PC-9 (cell line): ENCODE measurements at regions of chr17 and their contacts with region 1.

Region 1: DNA sequence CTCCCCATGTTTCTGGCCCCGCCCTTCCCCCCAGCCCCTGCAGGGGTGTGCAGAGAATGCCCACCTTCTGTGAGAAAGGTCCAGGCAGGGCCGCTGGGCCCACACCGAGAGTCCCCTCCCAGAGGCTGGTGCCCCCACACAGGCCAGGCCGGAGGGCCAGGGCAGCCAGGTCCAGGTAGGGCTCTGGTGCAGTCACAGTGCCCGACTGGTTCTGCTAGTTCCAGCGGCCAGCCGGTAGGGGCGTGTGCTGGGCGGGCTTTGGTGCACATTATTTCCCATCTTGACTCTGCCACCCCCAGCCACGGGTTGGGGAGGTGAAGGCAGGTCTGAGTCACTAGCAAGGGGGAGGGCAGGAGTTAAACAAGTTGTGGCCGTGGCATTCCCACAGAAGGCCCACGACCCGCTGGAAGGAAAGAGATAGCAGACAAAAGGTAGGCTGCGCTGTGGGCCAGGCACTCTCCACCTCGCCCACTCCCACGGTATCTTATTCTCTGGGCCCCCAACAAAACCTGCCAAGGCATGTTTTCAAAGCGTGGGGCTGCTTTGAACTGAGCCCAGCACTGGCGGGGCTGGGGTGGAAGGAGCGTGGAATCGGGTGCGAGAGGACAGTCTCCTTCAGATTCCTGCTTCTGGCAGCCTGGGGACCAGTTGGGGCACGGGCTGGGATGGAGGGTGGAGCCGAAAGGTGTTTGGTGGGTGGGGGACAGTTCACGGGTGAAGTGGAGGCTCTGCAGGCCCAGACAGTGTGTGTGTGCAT is 1.9 kb downstream of the EPN3 start:
- DNase-seq: peak; percentile 79 to 82
- H3K4me3 ChIP-seq: peak overlapping the region; percentile 89
- H3K27ac ChIP-seq: peak overlapping the region; percentile 51
- H3K4me1 ChIP-seq: peaks cover 42% of the 10 kb centered on the region
- H3K27me3 ChIP-seq: no peaks in the 10 kb centered on the region
- CTCF ChIP-seq: peak; percentile 72; the same call in 1 of the 2 replicates

Region 2: GRCh38 chr17:50304781-50305404 is 229.5 kb before region 1 on chr17:
- CTCF ChIA-PET with region 1: interaction called, 11 read pairs
- POLR2A ChIA-PET with region 1: no interaction called
- intact Hi-C with region 1: no loop called
- DNase-seq: no peak
- H3K4me3 ChIP-seq: no peak overlapping the region
- H3K27ac ChIP-seq: no peak overlapping the region
- H3K4me1 ChIP-seq: no peaks in the 10 kb centered on the region
- H3K27me3 ChIP-seq: no peaks in the 10 kb centered on the region
- CTCF ChIP-seq: no peak

Region 3: GRCh38 chr17:50560185-50560824 is 25.9 kb after region 1 on chr17 and contains the start of gene CACNA1G:
- CTCF ChIA-PET with region 1: no interaction called
- POLR2A ChIA-PET with region 1: no interaction called
- intact Hi-C with region 1: no loop called
- DNase-seq: peak; percentile 63 to 87
- H3K4me3 ChIP-seq: peak within 1 kb of the TSS; percentile 44
- H3K27ac ChIP-seq: no peak within 1 kb of the TSS
- H3K4me1 ChIP-seq: peaks cover 7% of the 10 kb centered on the region
- H3K27me3 ChIP-seq: peaks cover 21% of the 10 kb centered on the region
- CTCF ChIP-seq: no peak
- total RNA-seq, gene CACNA1G: 0.28 and 0.46 TPM in 2 replicates

Region 4: DNA sequence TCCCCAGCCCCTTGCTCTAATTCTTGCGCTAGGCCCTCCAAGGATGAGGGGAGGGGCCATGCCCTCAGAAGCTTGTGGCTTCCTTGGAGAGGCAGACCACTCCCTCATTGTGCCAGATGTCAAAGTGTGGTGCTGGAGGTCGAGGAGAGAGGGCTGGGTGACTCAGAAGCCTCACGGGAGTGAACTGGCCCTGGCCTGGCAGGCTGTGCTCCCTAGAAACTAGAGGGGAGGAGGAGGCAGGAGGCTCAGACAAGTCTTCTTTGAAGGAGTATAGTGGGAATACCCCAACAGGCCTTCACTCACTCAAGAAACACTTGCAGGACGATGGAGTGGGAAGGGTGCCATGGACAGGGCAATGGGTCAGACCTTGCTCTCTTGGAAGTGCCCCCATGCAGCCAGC is 154.9 kb after region 1 on chr17:
- CTCF ChIA-PET with region 1: no interaction called
- POLR2A ChIA-PET with region 1: no interaction called
- intact Hi-C with region 1: no loop called
- DNase-seq: peak; percentile 60 to 82
- H3K4me3 ChIP-seq: no peak overlapping the region
- H3K27ac ChIP-seq: 0 out of 2 replicates have a peak overlapping the region, but pooled peaks have one; percentile 8
- H3K4me1 ChIP-seq: peaks cover 92% of the 10 kb centered on the region
- H3K27me3 ChIP-seq: no peaks in the 10 kb centered on the region
- CTCF ChIP-seq: no peak